ENCODE measurements at regions of chr2 and their contacts with region 1.

Region 1: DNA sequence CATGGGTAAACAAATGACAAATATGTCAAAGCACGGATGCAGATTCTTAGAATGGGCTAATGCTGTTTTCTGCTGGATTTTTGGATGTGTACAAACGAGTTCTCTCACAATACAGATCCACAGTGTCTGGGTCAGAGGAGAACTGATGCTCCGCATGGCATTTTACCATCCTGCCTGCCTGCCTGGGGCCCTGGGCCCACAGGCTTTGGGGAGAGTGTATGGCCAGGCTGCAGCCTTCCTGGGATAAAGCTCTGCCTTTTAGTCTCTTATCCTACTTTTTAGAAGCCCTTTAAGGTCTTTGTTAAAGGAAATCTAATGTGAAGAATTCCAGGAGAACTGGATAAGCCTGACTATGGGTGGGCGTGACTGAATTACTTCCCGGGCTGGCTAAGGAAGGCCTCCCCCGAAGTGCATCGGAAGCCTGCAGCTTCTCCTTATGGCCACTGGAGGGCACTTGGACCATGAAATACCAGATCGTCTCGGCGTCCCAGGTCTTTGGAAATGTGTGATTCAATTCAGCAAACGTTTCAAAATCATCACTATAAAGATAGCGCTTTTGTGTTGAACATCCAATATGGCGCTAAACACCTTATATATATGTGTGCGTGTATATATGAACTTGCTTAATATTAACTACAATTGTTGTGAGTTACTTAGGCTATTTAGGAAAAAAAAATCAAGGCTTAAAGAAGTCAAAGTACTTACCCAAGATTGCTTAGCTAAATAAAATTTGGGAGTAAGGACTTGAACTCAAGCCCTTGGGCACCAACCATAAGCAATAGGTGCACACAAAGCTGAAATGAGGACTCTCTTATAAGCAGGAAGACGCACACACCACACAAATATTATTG is 15.2 kb upstream of the DNPEP start:
- DNase-seq: peak; percentile 42
- H3K4me3 ChIP-seq: no peak overlapping the region
- CTCF ChIP-seq: peak; percentile 85

Region 2: GRCh38 chr2:219218732-219219701 is 183.9 kb before region 1 on chr2 and contains the start of gene ABCB6:
- CTCF ChIA-PET with region 1: no interaction called
- POLR2A ChIA-PET with region 1: no interaction called
- DNase-seq: no peak
- H3K4me3 ChIP-seq: peak within 1 kb of the TSS; percentile 69
- CTCF ChIP-seq: no peak

Region 3: GRCh38 chr2:219423652-219424377 is 20.9 kb after region 1 on chr2:
- CTCF ChIA-PET with region 1: interaction called, 40 read pairs
- POLR2A ChIA-PET with region 1: no interaction called
- DNase-seq: no peak
- H3K4me3 ChIP-seq: no peak overlapping the region
- CTCF ChIP-seq: no peak

Region 4: DNA sequence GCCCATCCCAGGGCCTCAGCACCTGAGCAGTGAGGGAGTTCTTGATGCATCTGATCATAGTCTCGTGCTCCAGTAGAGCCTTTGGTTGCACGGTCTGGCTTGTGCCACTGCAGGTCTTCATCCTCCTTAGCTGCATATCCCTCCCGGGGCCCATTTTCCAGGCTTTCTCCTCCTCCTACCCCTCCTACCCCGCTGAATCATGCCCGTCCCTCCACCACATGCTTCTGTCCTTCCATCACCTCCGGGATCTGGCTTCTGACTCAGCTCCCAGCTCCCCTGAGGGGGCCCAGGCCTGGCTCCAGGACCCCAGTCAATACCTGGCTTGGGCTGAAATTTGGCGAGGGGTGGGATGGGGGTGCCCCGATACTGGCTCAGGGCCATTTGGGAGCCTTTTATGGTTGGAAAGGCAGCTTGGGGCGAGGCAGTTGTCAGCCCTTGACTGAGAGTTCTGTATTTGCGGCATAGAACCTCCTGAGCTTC is 50.0 kb after region 1 on chr2:
- CTCF ChIA-PET with region 1: interaction called, 30 read pairs
- POLR2A ChIA-PET with region 1: interaction called, 6 read pairs
- DNase-seq: peak; percentile 87
- H3K4me3 ChIP-seq: no peak overlapping the region
- CTCF ChIP-seq: no peak

Region 5: GRCh38 chr2:219475697-219476651 is 73.1 kb after region 1 on chr2:
- CTCF ChIA-PET with region 1: interaction called, 177 read pairs
- POLR2A ChIA-PET with region 1: no interaction called
- DNase-seq: no peak
- H3K4me3 ChIP-seq: no peak overlapping the region
- CTCF ChIP-seq: peak; percentile 86

Region 6: GRCh38 chr2:219515874-219516629 is 113.2 kb after region 1 on chr2:
- CTCF ChIA-PET with region 1: interaction called, 887 read pairs
- POLR2A ChIA-PET with region 1: no interaction called
- DNase-seq: no peak
- H3K4me3 ChIP-seq: no peak overlapping the region
- CTCF ChIP-seq: no peak

Region 7: DNA sequence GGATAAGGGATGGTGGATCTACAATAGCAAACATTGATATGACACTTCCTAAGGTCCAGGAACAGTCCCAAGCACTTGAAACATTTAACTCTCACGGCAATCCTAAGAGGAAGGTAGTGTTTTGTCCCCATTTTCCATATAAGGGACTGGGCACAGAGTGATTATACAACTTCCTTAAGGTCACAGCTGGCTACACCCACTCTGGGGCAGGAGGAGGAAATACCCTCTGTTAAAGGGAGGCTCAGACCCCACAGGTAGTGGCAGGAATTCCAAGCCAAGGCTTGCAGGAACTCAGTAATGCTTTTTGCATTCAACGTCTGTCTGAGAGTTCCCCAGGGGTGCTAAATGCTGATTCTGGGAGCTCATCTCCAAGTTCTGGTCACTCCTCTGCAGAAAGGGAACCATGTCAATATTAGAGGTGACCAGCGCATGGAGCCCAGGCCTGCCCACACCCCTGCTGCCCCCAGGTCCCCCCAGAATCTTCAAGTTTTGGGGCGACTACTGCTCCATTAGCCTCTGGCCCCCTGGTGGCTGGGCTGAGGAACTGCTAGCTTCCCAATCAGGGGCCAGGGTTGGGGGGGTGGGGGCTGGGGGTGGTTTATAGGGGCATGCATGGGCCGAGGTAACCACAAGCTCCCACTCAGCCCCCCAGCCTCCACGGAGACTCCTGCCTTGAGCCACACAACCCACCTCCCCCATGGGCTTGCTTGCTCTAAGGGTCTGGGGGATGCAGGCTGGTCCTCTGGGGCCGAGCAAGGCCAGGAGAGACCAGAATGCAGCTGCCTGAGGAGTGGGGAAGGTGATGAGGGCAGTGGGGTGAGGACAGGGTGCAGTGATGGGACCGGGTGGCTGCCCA is 157.4 kb after region 1 on chr2:
- CTCF ChIA-PET with region 1: interaction called, 19 read pairs
- POLR2A ChIA-PET with region 1: no interaction called
- DNase-seq: no peak
- H3K4me3 ChIP-seq: no peak overlapping the region
- CTCF ChIP-seq: peak; percentile 69

Region 8: DNA sequence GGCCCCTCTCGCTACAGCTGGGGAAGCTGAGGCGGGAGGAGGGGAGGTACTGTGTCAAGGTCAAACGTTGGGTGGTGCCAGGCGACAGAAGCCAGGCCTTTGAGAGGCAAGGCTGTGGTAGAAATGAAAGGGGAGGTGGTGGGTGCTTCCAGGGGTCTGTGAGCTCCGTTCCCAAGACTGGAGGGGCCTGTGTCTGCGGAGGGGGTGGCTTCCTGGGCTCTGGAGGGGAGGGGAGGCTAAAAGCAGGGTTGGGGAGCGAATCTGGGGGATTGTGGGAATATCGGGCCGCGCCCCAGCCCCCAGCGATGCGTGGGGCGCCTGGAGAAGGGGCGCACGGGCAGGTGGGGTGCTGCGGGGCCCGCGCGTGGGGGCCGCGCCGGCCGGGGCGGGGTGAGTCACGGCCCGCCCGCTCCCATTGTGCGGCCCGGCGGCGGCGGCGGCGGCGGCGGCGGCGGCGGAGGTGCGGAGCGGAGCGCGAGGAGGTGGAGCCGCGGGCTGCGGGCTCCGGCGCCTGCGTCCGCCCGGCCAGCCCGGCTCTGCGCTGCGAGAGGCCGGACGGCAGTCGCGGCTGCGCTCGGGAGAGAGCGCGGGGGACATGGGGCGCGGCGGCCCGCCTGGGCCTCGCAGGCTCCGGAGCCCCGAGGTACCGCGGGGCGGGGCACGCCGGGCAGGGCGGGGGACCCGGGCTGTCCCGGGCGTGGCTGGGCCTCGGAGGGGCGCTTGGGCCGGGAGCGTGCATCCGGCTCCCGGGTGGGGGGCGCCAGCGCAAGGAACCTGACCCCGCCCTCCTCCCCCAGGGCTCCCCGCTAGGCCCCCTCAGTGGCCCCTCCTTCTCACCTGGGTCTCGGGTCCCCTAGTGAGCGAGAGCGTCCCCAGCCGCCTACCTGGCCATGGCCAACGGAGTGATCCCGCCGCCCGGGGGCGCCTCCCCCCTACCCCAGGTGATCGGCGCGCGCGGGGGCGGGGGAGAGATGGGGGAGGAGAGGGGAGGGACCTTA is 224.5 kb after region 1 on chr2 and contains the start of gene SLC4A3:
- CTCF ChIA-PET with region 1: no interaction called
- POLR2A ChIA-PET with region 1: no interaction called
- DNase-seq: no peak
- H3K4me3 ChIP-seq: peak within 1 kb of the TSS; percentile 60
- CTCF ChIP-seq: peak; percentile 11